ENCODE measurements at regions of chr6 and their contacts with region 1.

Region 1: GRCh38 chr6:165969184-165969583 is 198.5 kb downstream of the TBXT start:
- DNase-seq: no peak
- ATAC-seq: no peak
- H3K4me3 ChIP-seq: no peak overlapping the region
- H3K27ac ChIP-seq: no peak overlapping the region
- H3K4me1 ChIP-seq: no peaks in the 10 kb centered on the region
- H3K27me3 ChIP-seq: peaks cover 4% of the 10 kb centered on the region
- CTCF ChIP-seq: no peak

Region 2: DNA sequence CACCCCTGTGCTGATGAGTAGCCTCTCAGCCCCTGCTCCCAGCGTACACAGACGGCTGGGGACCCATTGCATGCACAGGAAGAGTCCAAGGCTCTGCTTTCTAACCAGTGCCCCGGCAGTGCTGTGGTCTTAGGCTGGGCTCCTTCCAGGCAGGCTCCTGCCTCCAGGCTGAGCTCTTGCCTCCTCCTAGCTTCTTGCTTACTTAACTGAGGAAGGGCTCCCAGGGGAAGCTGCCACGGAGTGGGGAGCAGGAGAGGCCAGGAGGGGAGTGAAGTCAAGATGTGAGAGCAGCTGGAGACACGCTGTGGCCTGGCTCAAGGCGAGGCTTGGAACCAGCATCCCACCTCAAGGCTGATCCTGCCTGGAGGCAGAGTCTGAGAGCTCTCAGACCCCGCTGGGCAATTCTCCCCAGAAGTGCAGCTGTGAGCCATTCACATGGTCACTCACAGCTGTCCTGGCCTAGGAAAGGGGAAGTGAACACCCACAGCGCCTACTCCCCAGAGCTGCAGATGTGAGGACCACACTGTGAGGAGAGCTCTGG is 57.5 kb after region 1 on chr6:
- CTCF ChIA-PET with region 1: no interaction called
- POLR2A ChIA-PET with region 1: interaction called, 10 read pairs
- in situ Hi-C with region 1: no loop called
- intact Hi-C with region 1: no loop called
- DNase-seq: no peak
- ATAC-seq: no peak
- H3K4me3 ChIP-seq: no peak overlapping the region
- H3K27ac ChIP-seq: no peak overlapping the region
- H3K4me1 ChIP-seq: peaks cover 6% of the 10 kb centered on the region
- H3K27me3 ChIP-seq: no peaks in the 10 kb centered on the region
- CTCF ChIP-seq: no peak